Panc1 (cell line): ENCODE measurements at regions of chr1 and their contacts with region 1.

Region 1: GRCh38 chr1:182595641-182596240 is 6.7 kb upstream of the RNASEL start:
- DNase-seq: peak; percentile 41
- ATAC-seq: peak; percentile 64; the same call in 1 of the 2 replicates
- H3K4me3 ChIP-seq: no peak overlapping the region
- H3K27ac ChIP-seq: no peak overlapping the region
- H3K4me1 ChIP-seq: no peaks in the 10 kb centered on the region
- H3K27me3 ChIP-seq: peaks cover 7% of the 10 kb centered on the region
- CTCF ChIP-seq: peak; percentile 91

Region 2: DNA sequence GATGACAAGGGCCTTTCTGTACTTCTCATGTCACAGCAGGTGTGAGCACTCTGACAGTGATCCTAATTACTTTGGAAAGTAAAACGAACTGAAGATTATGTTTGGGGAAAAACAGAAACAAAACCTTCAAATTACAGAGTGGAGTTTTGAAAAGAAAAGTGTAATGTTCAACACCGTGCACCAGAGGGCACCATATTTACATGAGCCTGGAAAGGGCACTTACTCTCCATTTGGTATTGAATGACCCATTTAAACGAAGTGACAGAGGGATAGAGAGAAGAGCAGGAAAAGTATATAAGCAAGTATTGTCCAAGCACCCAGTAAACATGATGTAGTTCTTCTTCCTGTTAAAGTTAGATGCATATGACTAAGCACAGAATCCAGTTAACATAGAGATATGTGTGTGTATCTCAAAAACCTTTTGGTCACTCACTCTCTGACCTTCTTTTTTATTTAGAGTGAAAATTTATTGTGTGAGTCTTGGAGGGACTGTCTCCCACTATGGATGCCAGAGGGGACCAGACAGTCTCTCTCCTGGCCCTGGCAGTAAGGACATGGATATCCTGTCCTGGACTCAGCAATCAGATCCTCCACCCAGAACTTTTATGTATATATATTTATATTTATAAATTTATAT is 149.6 kb before region 1 on chr1:
- CTCF ChIA-PET with region 1: no interaction called
- POLR2A ChIA-PET with region 1: no interaction called
- in situ Hi-C with region 1: no loop called
- intact Hi-C with region 1: loop called (anchors 1 kb)
- DNase-seq: peak; percentile 30
- ATAC-seq: peak; percentile 75
- H3K4me3 ChIP-seq: no peak overlapping the region
- H3K27ac ChIP-seq: no peak overlapping the region
- H3K4me1 ChIP-seq: no peaks in the 10 kb centered on the region
- H3K27me3 ChIP-seq: no peaks in the 10 kb centered on the region
- CTCF ChIP-seq: peak; percentile 77

Region 3: GRCh38 chr1:182789138-182790076 is 193.7 kb after region 1 on chr1 and contains the start of gene NPL:
- CTCF ChIA-PET with region 1: interaction called, 16 read pairs
- POLR2A ChIA-PET with region 1: no interaction called
- in situ Hi-C with region 1: no loop called
- intact Hi-C with region 1: no loop called
- DNase-seq: no peak
- ATAC-seq: peak; percentile 97
- H3K4me3 ChIP-seq: peak within 1 kb of the TSS; percentile 50 to 62
- H3K27ac ChIP-seq: no peak within 1 kb of the TSS
- H3K4me1 ChIP-seq: 0 out of 2 replicates have a peak, but pooled peaks cover 3% of the 10 kb centered on the region
- H3K27me3 ChIP-seq: peaks cover 33% of the 10 kb centered on the region
- CTCF ChIP-seq: no peak
- total RNA-seq, gene NPL: 0.90 TPM